Heart right ventricle (tissue), 16 donors: ENCODE measurements at regions of chr17 and their contacts with region 1.

Region 1: GRCh38 chr17:48107168-48108132 is at the start of gene SNX11:
- DNase-seq: peak; percentile 91
- ATAC-seq: peak; percentile 97 to 99 (median 98)
- H3K4me3 ChIP-seq: peak within 1 kb of the TSS; percentile 54 to 91 (median 80)
- H3K27ac ChIP-seq: peak within 1 kb of the TSS; percentile 80 to 97 (median 93)
- H3K4me1 ChIP-seq: peaks cover 0 to 64% (median 30%) of the 10 kb centered on the region in 9 donors
- H3K27me3 ChIP-seq: no peaks in the 10 kb centered on the region
- CTCF ChIP-seq: peak in 5 of 9 donors; percentile 4 to 51 (median 24)
- total RNA-seq, gene SNX11: 7.2 to 17.0 (median 12.3) TPM

Region 2: DNA sequence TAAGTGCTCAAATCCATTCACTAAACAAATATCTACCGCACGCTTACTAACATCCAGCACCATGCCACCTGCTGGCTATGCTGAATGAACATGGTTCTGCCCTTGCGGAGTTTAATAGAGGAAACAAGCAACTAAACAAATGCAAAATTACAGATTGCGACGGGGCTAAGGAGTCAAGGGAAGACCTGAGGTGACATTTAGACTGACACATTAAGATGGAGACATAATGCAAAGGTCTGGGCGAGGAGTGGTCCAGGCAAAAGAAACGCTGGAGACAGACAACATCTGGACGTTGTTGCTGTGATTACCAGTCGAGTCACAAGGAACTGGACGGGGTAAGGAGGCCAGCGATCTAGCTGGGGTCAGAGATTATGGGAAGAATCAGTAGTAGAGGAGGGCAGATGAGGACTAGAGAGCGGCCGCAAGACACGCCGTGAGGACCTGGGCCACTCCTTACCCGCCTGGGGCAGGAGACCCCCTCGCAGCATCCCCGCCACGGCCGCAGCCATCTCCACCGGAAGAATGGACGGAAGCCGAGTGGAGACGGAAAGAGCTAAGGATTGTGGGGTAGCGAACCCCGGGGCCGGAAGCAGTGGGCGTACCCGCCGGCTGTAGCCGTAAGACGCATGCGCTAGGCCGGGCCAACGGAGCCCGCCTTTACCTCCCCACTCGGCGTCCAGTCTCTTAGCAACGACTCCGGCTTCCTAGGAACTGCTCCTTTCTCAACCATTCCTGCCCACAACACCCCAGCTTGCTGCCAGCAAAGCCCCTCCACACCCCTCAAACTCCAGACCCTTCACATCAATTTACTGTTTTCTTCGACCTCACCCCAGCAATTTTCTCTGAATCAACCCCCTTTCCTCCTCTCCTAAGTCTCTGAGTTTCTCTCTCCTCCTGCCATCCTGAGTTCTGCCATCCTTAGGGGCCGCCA is 276.2 kb before region 1 on chr17 and contains the starts of genes LRRC46 and MRPL10:
- intact Hi-C with region 1: loop called in 1 of 10 experiments (anchors 10 kb)
- DNase-seq: peak; percentile 93 to 94
- ATAC-seq: peak; percentile 93 to 98 (median 97)
- H3K4me3 ChIP-seq: peak within 1 kb of the TSS; percentile 53 to 93 (median 75)
- H3K27ac ChIP-seq: peak within 1 kb of the TSS in 9 of 10 donors; percentile 28 to 90 (median 74)
- H3K4me1 ChIP-seq: peaks cover 8 to 48% (median 33%) of the 10 kb centered on the region in 9 donors
- H3K27me3 ChIP-seq: no peaks in the 10 kb centered on the region
- CTCF ChIP-seq: peak in 2 of 9 donors; percentile 12 to 17
- total RNA-seq, gene LRRC46: 0.14 to 0.53 (median 0.34) TPM in 7 of 10 donors, not detected in the others
- total RNA-seq, gene MRPL10: 44.8 to 72.3 (median 62.9) TPM

Region 3: DNA sequence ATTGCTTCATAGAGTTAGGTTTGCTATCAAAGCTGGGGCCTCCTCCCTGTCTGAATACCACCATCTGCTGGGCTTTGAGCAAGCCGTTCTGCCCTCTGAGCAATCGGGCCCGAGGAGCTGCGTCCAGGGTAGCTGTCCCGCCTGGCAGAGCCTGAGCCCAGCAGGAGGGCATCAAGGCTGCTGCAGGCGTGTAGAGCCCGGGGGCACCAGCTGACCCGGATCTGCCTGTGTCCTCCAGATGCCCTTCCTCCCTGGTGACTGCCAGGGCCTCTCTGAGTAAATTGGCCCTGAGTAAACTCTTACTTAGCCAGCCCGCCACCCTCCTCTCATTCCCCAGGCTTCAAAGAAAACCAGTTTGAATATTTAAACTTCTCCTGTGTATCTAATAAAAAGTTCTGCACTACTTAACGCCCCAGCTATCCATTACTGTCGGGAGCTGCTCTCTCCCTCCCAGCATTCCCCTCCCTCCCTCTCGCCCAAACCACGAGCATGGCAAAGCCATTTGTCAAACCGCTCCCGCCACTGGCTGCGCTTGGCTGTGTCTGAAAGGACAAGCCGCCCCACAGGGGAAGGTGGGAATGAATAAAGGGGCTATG is 120.1 kb before region 1 on chr17:
- intact Hi-C with region 1: no loop called
- DNase-seq: no peak
- ATAC-seq: peak in 6 of 8 donors; percentile 23 to 61 (median 54)
- H3K4me3 ChIP-seq: no peak overlapping the region
- H3K27ac ChIP-seq: peak overlapping the region in 3 of 10 donors; percentile 28 to 70 (median 57)
- H3K4me1 ChIP-seq: peaks cover 0 to 36% (median 20%) of the 10 kb centered on the region in 9 donors
- H3K27me3 ChIP-seq: no peaks in the 10 kb centered on the region
- CTCF ChIP-seq: no peak

Region 4: GRCh38 chr17:48024937-48025906 is 82.2 kb before region 1 on chr17:
- intact Hi-C with region 1: loop called in 1 of 10 experiments (anchors 1 kb)
- DNase-seq: peak; percentile 96 to 98
- ATAC-seq: peak; percentile 87 to 95 (median 92)
- H3K4me3 ChIP-seq: peak overlapping the region; percentile 27 to 60 (median 54)
- H3K27ac ChIP-seq: peak overlapping the region; percentile 32 to 89 (median 82)
- H3K4me1 ChIP-seq: peaks cover 18 to 51% (median 41%) of the 10 kb centered on the region in 9 donors
- H3K27me3 ChIP-seq: peaks cover 0 to 28% (median 16%) of the 10 kb centered on the region in 7 donors
- CTCF ChIP-seq: peak; percentile 53 to 88 (median 80)

Region 5: DNA sequence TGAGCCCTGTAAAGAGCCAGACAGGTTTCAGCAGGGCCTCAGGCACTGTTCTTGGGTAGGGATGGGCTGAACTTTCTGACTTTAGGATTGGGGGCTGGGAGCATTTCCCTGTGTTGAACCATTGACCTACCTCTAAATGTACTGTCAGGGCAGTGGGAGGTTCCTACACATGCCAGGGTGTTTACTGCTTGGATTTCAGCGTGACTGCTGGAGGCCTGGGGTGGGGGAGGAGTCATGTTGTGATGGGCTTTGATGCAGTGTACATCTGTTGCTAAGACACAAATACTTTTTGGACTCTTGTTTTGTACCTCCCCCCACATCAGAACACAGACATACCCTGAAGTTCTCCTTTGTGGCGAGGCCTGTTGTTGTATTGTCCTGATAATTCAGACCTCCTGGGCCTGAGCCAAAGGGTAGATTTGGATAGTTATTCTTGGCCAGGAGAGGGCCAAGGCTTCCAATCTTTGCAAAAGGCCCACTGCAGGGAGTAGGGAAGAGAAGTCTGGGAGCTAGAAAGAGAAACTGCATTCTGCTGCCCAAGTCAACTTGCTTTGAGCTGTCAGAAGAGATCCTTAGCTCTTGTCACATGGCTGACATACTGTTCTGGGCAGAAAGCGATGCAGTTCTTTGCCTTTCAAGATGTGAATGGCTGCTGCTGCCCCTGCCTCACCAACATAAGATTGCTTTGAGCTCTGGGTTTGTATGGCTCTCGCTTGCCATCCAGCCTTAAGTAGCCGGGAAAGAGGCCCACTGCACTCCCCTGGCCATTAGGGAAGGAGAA is 55.6 kb before region 1 on chr17:
- intact Hi-C with region 1: loop called in 1 of 10 experiments (anchors 2 kb)
- DNase-seq: peak; percentile 55 to 92
- ATAC-seq: peak in 7 of 8 donors; percentile 3 to 36 (median 13)
- H3K4me3 ChIP-seq: peak overlapping the region; percentile 27 to 89 (median 84)
- H3K27ac ChIP-seq: peak overlapping the region; percentile 92 to 99 (median 98)
- H3K4me1 ChIP-seq: peaks cover 45 to 84% (median 76%) of the 10 kb centered on the region in 9 donors
- H3K27me3 ChIP-seq: no peaks in the 10 kb centered on the region
- CTCF ChIP-seq: peak in 4 of 9 donors; percentile 14 to 48 (median 38)